ENCODE measurements at regions of chr7 and their contacts with region 1.

Region 1: GRCh38 chr7:91276909-91277308 is 12.7 kb downstream of the FZD1 start:
- DNase-seq: no peak
- ATAC-seq: no peak
- H3K4me3 ChIP-seq: no peak overlapping the region
- H3K27ac ChIP-seq: no peak overlapping the region
- H3K4me1 ChIP-seq: no peaks in the 10 kb centered on the region
- H3K27me3 ChIP-seq: no peaks in the 10 kb centered on the region
- CTCF ChIP-seq: no peak
- EP300 ChIP-seq: no peak
- POLR2A ChIP-seq: no peak
- RAD21 ChIP-seq: no peak

Region 2: DNA sequence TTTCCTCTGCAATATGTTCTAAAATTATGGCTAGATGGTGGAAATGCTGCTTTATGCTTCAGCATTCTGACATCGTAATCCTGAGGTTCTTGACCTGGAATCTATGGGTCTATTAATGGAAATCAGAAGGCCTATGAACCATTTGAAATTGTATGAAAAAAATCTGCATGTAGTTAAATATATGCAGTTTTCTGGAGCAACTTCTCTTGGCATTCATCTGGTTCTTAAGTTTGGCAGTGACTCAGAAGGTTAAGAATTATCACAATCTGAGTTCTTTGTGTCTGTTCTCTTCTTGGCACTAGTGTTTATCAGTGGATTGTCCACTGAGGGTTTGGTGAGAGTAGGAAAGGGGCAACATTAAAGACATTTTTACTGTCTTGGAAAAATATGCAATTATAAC is 83.8 kb before region 1 on chr7:
- CTCF ChIA-PET with region 1: no interaction called
- POLR2A ChIA-PET with region 1: no interaction called
- in situ Hi-C with region 1: no loop called
- intact Hi-C with region 1: no loop called
- DNase-seq: no peak
- ATAC-seq: no peak
- H3K4me3 ChIP-seq: no peak overlapping the region
- H3K27ac ChIP-seq: no peak overlapping the region
- H3K4me1 ChIP-seq: no peaks in the 10 kb centered on the region
- H3K27me3 ChIP-seq: no peaks in the 10 kb centered on the region
- CTCF ChIP-seq: no peak
- EP300 ChIP-seq: no peak
- POLR2A ChIP-seq: no peak
- RAD21 ChIP-seq: no peak

Region 3: GRCh38 chr7:91294639-91295220 is 17.8 kb after region 1 on chr7:
- CTCF ChIA-PET with region 1: no interaction called
- POLR2A ChIA-PET with region 1: no interaction called
- in situ Hi-C with region 1: no loop called
- intact Hi-C with region 1: loop called (anchors 1 kb)
- DNase-seq: no peak
- ATAC-seq: no peak
- H3K4me3 ChIP-seq: no peak overlapping the region
- H3K27ac ChIP-seq: no peak overlapping the region
- H3K4me1 ChIP-seq: no peaks in the 10 kb centered on the region
- H3K27me3 ChIP-seq: no peaks in the 10 kb centered on the region
- CTCF ChIP-seq: no peak
- EP300 ChIP-seq: no peak
- POLR2A ChIP-seq: no peak
- RAD21 ChIP-seq: no peak

Region 4: DNA sequence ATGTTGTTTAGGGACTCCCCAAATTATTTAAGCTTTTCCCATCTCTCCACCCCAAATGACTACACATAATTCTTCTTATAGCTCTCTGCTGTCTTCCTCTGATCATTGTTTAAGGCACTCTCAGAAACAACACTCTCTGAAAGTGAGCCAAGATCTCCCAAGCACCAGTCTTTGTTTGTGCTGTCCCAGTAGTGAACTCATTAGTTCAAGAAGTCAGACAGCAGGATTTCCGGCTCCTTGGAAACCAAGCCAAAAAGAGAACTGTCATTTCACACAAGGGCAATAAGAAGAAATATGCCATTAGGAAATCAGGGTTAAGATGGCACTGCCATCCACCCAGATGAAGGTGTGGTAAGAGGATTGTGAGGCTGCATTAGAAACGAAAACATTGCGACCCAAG is 70.4 kb after region 1 on chr7:
- CTCF ChIA-PET with region 1: no interaction called
- POLR2A ChIA-PET with region 1: no interaction called
- in situ Hi-C with region 1: no loop called
- intact Hi-C with region 1: no loop called
- DNase-seq: no peak
- ATAC-seq: no peak
- H3K4me3 ChIP-seq: no peak overlapping the region
- H3K27ac ChIP-seq: no peak overlapping the region
- H3K4me1 ChIP-seq: no peaks in the 10 kb centered on the region
- H3K27me3 ChIP-seq: 0 out of 5 replicates have a peak, but pooled peaks cover 0 to 3% of the 10 kb centered on the region in 2 experiments
- CTCF ChIP-seq: no peak
- EP300 ChIP-seq: no peak
- POLR2A ChIP-seq: no peak
- RAD21 ChIP-seq: no peak

Measured in HepG2 (cell line).